ENCODE measurements at regions of chr16 and their contacts with region 1.

Region 1: DNA sequence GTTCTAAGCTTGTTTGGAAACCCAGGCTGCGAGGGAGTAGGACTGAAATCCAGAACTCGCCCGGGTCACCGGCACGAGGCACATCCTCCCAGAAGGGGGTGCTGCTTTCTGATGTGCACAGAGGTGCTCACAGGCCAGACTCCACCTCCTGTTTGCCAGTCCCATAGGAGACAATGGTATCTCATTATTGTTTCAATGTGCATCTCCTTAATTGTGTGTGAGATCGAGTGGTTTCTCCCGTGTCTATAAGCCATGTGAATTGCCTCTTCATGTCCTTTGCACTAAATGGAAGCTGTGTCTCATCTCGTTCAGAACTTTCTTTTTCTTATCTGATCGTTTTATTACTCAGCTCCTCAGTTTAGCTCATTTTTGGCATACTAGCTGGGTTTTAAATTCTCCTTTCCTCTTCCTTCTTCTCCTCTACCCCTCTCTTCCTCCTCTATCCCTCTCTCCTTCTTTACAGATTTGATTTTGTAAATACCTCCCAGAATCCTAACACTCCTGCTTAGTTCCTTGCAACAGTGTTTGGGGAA is 32.1 kb upstream of the PRKCB start:
- DNase-seq: peak; percentile 84
- ATAC-seq: peak; percentile 88
- H3K4me3 Mint-ChIP-seq: peak overlapping the region; percentile 1
- H3K27ac Mint-ChIP-seq: peak overlapping the region; percentile 42
- H3K4me1 Mint-ChIP-seq: peaks cover 12% of the 10 kb centered on the region
- H3K27me3 Mint-ChIP-seq: peaks cover 2% of the 10 kb centered on the region

Region 2: DNA sequence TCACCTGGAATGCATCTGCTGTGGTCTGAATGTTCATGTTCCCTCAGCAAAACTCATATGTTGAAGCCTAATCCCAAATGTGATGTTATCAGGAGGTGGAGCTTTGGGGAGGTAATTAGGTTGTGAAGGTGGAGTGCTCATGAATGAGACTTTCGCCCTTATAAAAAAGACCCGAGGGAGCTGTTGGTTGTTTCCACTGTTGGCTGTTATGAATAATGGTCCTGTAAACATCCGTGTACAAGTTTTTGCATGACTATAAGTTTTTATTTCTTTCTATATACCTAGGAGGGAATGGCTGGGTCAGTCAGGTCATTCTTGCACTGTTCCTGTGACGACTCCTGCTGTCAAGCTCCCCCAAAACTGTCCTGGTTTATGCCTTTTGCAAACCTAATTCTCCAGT is 58.4 kb before region 1 on chr16:
- CTCF ChIA-PET with region 1: no interaction called
- POLR2A ChIA-PET with region 1: no interaction called
- intact Hi-C with region 1: no loop called
- DNase-seq: no peak
- ATAC-seq: no peak
- H3K4me3 Mint-ChIP-seq: no peak overlapping the region
- H3K27ac Mint-ChIP-seq: no peak overlapping the region
- H3K4me1 Mint-ChIP-seq: no peaks in the 10 kb centered on the region
- H3K27me3 Mint-ChIP-seq: peaks cover 30% of the 10 kb centered on the region

Region 3: GRCh38 chr16:23835390-23836077 is 31.9 kb after region 1 on chr16 and contains the start of gene PRKCB:
- CTCF ChIA-PET with region 1: interaction called, 9 read pairs
- POLR2A ChIA-PET with region 1: no interaction called
- intact Hi-C with region 1: loop called (anchors 2 kb)
- DNase-seq: peak; percentile 95
- ATAC-seq: peak; percentile 79
- H3K4me3 Mint-ChIP-seq: peak within 1 kb of the TSS; percentile 80
- H3K27ac Mint-ChIP-seq: peak within 1 kb of the TSS; percentile 59
- H3K4me1 Mint-ChIP-seq: peaks cover 54% of the 10 kb centered on the region
- H3K27me3 Mint-ChIP-seq: peaks cover 2% of the 10 kb centered on the region
- total RNA-seq, gene PRKCB: 57.5 to 83.8 TPM

Region 4: DNA sequence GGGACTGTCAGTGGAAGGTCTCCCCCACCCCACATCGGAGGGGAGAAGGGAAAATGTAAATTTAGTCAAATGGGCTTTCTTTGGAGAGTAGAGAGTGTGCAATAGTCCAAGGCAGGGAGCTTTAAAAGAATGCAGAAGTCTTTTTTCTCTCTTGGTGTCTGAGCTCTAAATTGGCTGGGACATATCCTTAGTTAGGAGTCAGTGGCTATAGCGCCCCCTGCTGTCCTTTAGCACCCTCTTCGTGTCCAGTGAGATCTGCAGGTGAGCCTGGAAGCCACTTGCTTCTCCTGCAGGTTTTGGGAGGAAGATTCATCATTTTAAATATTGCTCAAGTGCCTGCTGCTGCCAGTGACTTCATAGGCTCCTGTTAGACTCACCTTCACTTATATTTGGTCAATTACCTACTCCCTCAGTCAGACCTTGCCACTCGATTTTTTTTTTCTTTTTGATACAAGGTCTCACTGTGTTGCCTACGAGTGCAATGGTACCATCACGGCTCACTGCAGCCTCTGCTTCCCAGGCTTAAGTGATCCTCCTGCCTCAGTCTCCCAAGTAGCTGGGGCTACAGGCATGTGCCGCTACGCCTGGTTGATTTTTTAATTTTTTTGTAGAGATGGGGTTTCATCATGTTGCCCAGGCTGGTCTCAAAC is 206.9 kb after region 1 on chr16:
- CTCF ChIA-PET with region 1: interaction called, 68 read pairs
- POLR2A ChIA-PET with region 1: interaction called, 3 read pairs
- intact Hi-C with region 1: loop called (anchors 1 kb)
- DNase-seq: peak; percentile 90
- ATAC-seq: peak; percentile 54
- H3K4me3 Mint-ChIP-seq: no peak overlapping the region
- H3K27ac Mint-ChIP-seq: no peak overlapping the region
- H3K4me1 Mint-ChIP-seq: peaks cover 46% of the 10 kb centered on the region
- H3K27me3 Mint-ChIP-seq: no peaks in the 10 kb centered on the region

Region 5: DNA sequence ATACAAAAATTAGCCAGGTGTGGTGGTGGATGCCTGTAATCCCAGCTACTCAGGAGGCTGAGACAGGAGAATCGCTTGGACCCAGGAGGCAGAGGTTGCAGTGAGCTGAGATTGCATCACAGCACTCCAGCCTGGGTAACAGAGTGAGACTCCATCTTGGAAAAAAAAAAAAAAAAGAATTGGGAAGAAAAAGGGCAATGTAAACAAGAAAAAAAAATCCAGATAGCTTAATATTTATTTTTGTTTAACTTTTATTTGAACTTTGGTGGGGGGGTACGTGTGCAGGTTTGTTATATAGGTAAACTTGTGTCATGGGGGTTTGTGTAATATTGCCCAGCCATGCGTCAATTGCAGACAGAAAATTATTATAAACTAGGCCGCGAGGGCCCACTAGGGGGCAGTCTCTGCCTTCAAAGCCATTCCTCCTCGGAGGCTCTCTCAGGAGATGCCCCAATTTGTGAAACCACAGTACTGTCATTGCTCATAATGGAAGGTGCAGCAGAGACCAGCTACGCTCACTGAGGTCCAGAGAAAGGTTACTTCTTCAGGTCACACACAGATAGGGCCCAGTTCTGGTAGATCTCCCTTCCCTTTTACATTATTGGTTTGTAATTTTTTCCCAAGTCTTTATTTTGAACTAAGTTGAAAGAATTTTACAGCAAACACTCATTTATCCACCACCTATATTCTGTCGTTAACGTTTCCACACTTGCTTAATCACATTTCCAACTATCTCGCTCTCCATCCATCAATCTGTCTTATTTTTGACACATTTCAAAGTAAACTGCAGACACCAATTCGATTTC is 238.4 kb after region 1 on chr16:
- CTCF ChIA-PET with region 1: interaction called, 81 read pairs
- POLR2A ChIA-PET with region 1: no interaction called
- intact Hi-C with region 1: no loop called
- DNase-seq: peak; percentile 90
- ATAC-seq: peak; percentile 93
- H3K4me3 Mint-ChIP-seq: no peak overlapping the region
- H3K27ac Mint-ChIP-seq: no peak overlapping the region
- H3K4me1 Mint-ChIP-seq: peaks cover 5% of the 10 kb centered on the region
- H3K27me3 Mint-ChIP-seq: no peaks in the 10 kb centered on the region

Region 6: GRCh38 chr16:24504472-24505345 is 701.1 kb after region 1 on chr16:
- CTCF ChIA-PET with region 1: interaction called, 9 read pairs
- POLR2A ChIA-PET with region 1: no interaction called
- intact Hi-C with region 1: loop called (anchors 1 to 10 kb)
- DNase-seq: peak; percentile 72
- ATAC-seq: peak; percentile 96
- H3K4me3 Mint-ChIP-seq: no peak overlapping the region
- H3K27ac Mint-ChIP-seq: no peak overlapping the region
- H3K4me1 Mint-ChIP-seq: no peaks in the 10 kb centered on the region
- H3K27me3 Mint-ChIP-seq: peaks cover 14% of the 10 kb centered on the region